ENCODE measurements at regions of chr1 and their contacts with region 1.

Region 1: DNA sequence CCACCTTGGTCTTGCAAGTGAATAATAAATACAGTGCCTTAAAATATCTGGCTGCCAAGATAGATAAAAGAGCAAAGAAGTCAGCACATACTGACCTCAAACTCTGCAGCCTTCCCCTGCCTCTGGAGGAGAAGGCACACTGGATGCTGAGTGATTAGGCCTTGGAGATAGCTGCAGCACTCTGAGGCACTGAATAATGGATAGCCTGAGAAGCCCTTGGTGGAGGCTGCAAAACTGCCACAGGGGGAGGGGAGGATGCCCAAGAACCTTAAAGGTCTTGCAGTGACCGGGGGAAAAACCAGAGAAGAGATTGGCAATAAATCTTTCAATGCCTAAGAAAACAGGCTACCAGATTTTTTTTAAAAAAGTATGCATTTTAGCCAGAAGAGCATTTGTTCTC is 167.4 kb upstream of the PRMT6 start:
- DNase-seq: no peak
- H3K4me3 ChIP-seq: no peak overlapping the region
- H3K27ac ChIP-seq: no peak overlapping the region
- H3K4me1 ChIP-seq: no peaks in the 10 kb centered on the region
- H3K27me3 ChIP-seq: no peaks in the 10 kb centered on the region
- CTCF ChIP-seq: no peak
- POLR2A ChIP-seq: no peak

Region 2: DNA sequence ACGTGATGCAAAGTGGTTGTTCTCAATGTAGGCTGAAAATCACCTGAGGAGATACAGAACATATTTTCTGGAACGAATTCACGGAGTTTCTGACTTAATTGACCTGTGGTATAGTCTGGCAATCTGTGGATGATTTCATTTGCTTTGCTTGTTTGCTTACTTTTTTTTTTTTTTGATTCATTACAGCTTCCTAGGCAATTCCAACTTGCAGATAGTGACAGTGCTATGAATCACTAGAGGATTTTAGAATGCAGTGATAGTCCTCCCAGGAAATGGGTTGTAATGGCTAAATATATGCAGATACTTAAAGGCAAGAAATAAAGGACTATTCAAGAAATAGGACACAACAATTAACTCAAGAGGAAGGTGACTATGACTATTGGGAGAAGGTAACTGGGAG is 1210.7 kb before region 1 on chr1:
- intact Hi-C with region 1: loop called (anchors 5 kb)
- DNase-seq: no peak
- H3K4me3 ChIP-seq: no peak overlapping the region
- H3K27ac ChIP-seq: no peak overlapping the region
- H3K4me1 ChIP-seq: no peaks in the 10 kb centered on the region
- H3K27me3 ChIP-seq: no peaks in the 10 kb centered on the region
- CTCF ChIP-seq: no peak
- POLR2A ChIP-seq: no peak

Region 3: DNA sequence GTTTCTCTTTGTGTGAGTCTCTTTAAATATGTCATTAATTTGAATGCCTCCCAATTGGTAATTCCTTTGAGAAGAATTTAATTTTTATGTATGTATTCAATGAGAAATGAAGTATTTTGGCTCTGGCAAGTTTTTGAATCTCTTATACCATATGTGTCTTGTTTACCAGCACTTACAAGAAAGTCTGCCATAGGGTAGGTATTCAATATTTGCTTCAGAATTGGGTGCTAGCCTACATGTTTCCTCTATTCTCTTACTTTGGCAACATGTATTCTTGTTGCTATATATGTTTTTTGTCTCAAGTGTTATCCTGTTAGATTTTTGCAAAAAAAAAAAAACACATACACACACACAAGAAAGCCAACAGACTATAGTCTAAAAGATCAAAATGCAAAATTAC is 183.1 kb before region 1 on chr1:
- intact Hi-C with region 1: no loop called
- DNase-seq: no peak
- H3K4me3 ChIP-seq: no peak overlapping the region
- H3K27ac ChIP-seq: no peak overlapping the region
- H3K4me1 ChIP-seq: no peaks in the 10 kb centered on the region
- H3K27me3 ChIP-seq: no peaks in the 10 kb centered on the region
- CTCF ChIP-seq: no peak
- POLR2A ChIP-seq: no peak

Region 4: DNA sequence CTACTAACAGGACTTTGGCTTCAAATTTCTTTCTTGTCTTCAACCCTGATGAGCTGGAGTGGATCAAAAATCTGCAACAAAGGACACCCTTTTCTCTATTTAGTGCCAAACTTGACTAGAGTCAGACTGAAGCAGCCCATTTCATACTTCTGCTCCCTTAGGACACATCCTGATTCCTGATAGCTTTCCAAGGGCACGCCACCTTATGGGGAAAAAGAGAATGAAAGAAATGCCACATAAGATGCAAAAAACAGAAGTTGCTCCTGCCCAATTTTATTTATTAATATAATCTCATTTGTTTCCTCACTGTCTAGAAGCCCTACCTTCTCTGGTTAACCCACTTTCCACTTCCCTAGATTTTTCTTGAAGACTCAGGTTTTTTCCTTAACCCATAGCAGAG is 1427.5 kb after region 1 on chr1:
- intact Hi-C with region 1: no loop called
- DNase-seq: no peak
- H3K4me3 ChIP-seq: no peak overlapping the region
- H3K27ac ChIP-seq: no peak overlapping the region
- H3K4me1 ChIP-seq: no peaks in the 10 kb centered on the region
- H3K27me3 ChIP-seq: no peaks in the 10 kb centered on the region
- CTCF ChIP-seq: no peak
- POLR2A ChIP-seq: no peak

Measured in breast epithelium (tissue), 4 donors.